ENCODE measurements at regions of chr9 and their contacts with region 1.

Region 1: GRCh38 chr9:70639853-70640814 is 225.7 kb upstream of the KLF9 start:
- DNase-seq: peak; percentile 62
- H3K4me3 ChIP-seq: no peak overlapping the region
- H3K27ac ChIP-seq: no peak overlapping the region
- H3K4me1 ChIP-seq: peaks cover 5% of the 10 kb centered on the region
- H3K27me3 ChIP-seq: peaks cover 0 to 2% of the 10 kb centered on the region in 2 experiments
- CTCF ChIP-seq: peak; percentile 51
- POLR2A ChIP-seq: no peak

Region 2: GRCh38 chr9:70902692-70903131 is 262.6 kb after region 1 on chr9:
- CTCF ChIA-PET with region 1: no interaction called
- POLR2A ChIA-PET with region 1: no interaction called
- dilution Hi-C with region 1: no loop called
- intact Hi-C with region 1: loop called (anchors 2 kb)
- DNase-seq: peak; percentile 87
- H3K4me3 ChIP-seq: peak overlapping the region in 2 of 3 experiments; percentile 20 to 57
- H3K27ac ChIP-seq: peak overlapping the region; percentile 95
- H3K4me1 ChIP-seq: peaks cover 29% of the 10 kb centered on the region
- H3K27me3 ChIP-seq: no peaks in the 10 kb centered on the region
- CTCF ChIP-seq: no peak
- POLR2A ChIP-seq: peak; percentile 61

Region 3: GRCh38 chr9:71145179-71145578 is 505.0 kb after region 1 on chr9:
- CTCF ChIA-PET with region 1: interaction called, 7 read pairs
- POLR2A ChIA-PET with region 1: no interaction called
- dilution Hi-C with region 1: no loop called
- intact Hi-C with region 1: loop called (anchors 5 kb)
- DNase-seq: peak; percentile 99
- H3K4me3 ChIP-seq: no peak overlapping the region
- H3K27ac ChIP-seq: peak overlapping the region; percentile 57
- H3K4me1 ChIP-seq: peaks cover 23% of the 10 kb centered on the region
- H3K27me3 ChIP-seq: no peaks in the 10 kb centered on the region
- CTCF ChIP-seq: no peak
- POLR2A ChIP-seq: peak; percentile 24

Region 4: GRCh38 chr9:71243951-71244350 is 603.8 kb after region 1 on chr9:
- CTCF ChIA-PET with region 1: interaction called, 420 read pairs
- POLR2A ChIA-PET with region 1: no interaction called
- dilution Hi-C with region 1: no loop called
- intact Hi-C with region 1: loop called (anchors 1 kb)
- DNase-seq: no peak
- H3K4me3 ChIP-seq: no peak overlapping the region
- H3K27ac ChIP-seq: no peak overlapping the region
- H3K4me1 ChIP-seq: no peaks in the 10 kb centered on the region
- H3K27me3 ChIP-seq: peaks cover 0 to 2% of the 10 kb centered on the region in 2 experiments
- CTCF ChIP-seq: no peak
- POLR2A ChIP-seq: no peak

Region 5: GRCh38 chr9:71716138-71716909 is 1076.2 kb after region 1 on chr9:
- CTCF ChIA-PET with region 1: interaction called, 12 read pairs
- POLR2A ChIA-PET with region 1: no interaction called
- dilution Hi-C with region 1: no loop called
- intact Hi-C with region 1: no loop called
- DNase-seq: peak; percentile 30
- H3K4me3 ChIP-seq: no peak overlapping the region
- H3K27ac ChIP-seq: no peak overlapping the region
- H3K4me1 ChIP-seq: no peaks in the 10 kb centered on the region
- H3K27me3 ChIP-seq: no peaks in the 10 kb centered on the region
- CTCF ChIP-seq: peak in 1 of 2 donors; percentile 20
- POLR2A ChIP-seq: no peak